Left cardiac atrium (tissue), 4 donors: ENCODE measurements at regions of chr2 and their contacts with region 1.

Region 1: DNA sequence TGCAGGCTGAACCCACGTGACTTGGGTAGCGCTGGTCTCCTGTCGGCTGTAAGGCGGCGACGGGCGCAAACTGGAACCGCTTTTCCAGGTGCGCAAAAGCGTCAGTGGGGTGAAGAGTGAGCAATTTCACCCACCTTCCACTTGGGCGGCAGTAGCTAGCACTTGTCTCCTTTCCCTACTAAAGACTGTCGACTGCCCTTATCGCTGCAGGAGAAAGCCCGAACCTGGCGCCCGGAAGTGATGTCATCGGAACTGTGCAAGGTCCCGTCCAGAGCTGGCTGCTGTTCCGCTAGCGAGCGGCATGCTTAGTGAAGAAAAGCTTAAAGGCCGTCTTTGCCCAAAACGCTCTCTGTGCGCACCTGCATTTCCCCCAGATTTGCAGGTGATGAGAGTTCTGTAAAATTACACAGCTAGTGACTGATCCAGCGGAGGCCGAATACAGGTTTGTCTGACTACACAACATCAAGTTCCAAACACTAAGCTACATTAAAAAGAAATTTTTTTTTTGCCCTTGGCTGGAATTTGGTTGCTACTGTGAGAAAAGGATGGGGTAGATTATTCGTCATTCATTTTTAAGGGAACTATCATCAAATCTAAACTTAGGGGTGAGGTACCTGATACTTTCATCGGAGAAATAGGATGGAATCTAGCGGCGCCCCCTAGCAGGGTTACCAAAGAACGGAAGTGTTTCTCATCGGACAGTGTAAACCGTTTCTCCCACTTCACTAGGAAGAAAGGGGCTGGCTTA is at the start of gene OSGEPL1:
- DNase-seq: peak; percentile 95
- ATAC-seq: peak; percentile 98
- total RNA-seq, gene OSGEPL1: 5.2 to 9.2 TPM

Region 2: GRCh38 chr2:189783927-189784867 is 21.5 kb after region 1 on chr2 and contains the starts of genes ORMDL1 and PMS1:
- intact Hi-C with region 1: loop called in 1 of 2 experiments (anchors 1 kb)
- DNase-seq: peak; percentile 97
- ATAC-seq: peak; percentile 99
- total RNA-seq, gene ORMDL1: 29.7 to 40.2 TPM
- total RNA-seq, gene PMS1: 13.8 to 14.9 TPM